PC-3 (cell line): ENCODE measurements at regions of chr12 and their contacts with region 1.

Region 1: DNA sequence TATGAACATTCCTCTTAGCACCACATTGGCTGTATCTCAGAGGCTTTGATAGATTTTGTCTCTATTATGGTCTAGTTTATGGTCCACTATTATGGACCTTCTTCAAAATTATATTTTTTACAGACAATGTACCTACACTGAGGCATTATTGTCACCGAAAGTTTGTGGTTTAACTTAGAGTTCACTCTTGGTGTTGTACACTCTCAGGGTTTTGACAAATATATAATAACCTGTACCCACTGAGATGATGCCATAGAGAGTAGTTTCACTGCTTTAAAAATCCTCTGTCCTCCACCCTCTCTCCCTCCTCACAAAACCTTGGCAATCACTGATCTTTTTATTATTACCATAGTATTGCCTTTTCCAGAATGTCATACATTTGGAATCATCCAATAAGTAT is 528.2 kb downstream of the SLC6A15 start:
- DNase-seq: no peak
- ATAC-seq: no peak
- H3K4me3 ChIP-seq: no peak overlapping the region
- H3K27ac ChIP-seq: no peak overlapping the region
- H3K4me1 ChIP-seq: peaks cover 10% of the 10 kb centered on the region
- H3K27me3 ChIP-seq: no peaks in the 10 kb centered on the region
- CTCF ChIP-seq: no peak

Region 2: GRCh38 chr12:83823431-83823963 is 560.9 kb before region 1 on chr12:
- CTCF ChIA-PET with region 1: no interaction called
- POLR2A ChIA-PET with region 1: no interaction called
- intact Hi-C with region 1: loop called (anchors 10 kb)
- DNase-seq: peak; percentile 64
- ATAC-seq: peak; percentile 46; the same call in 1 of the 2 replicates
- H3K4me3 ChIP-seq: no peak overlapping the region
- H3K27ac ChIP-seq: no peak overlapping the region
- H3K4me1 ChIP-seq: peaks cover 10% of the 10 kb centered on the region
- H3K27me3 ChIP-seq: no peaks in the 10 kb centered on the region
- CTCF ChIP-seq: peak; percentile 76

Region 3: DNA sequence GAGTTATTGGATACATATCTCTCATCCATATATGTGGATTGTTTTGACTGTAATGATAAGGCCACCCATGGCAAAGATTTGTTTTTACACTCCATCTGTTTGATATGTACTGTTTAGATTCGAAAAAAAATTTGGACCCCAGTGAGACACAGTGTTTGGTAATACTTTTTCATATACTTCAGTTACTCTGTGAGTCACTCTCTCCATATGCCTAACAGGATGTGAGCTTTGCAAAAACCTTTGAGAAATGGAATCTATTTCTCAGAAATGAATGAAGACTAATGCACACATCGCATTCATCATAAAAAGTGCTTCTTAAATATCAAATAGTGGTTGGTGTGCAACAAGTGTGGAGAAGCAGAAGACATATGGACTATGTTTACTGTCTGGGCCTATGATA is 253.3 kb before region 1 on chr12:
- CTCF ChIA-PET with region 1: no interaction called
- POLR2A ChIA-PET with region 1: no interaction called
- intact Hi-C with region 1: loop called (anchors 10 kb)
- DNase-seq: peak; percentile 75
- ATAC-seq: peak; percentile 75
- H3K4me3 ChIP-seq: no peak overlapping the region
- H3K27ac ChIP-seq: peak overlapping the region; percentile 11
- H3K4me1 ChIP-seq: peaks cover 34% of the 10 kb centered on the region
- H3K27me3 ChIP-seq: no peaks in the 10 kb centered on the region
- CTCF ChIP-seq: no peak